ENCODE measurements at regions of chr20 and their contacts with region 1.

Region 1: DNA sequence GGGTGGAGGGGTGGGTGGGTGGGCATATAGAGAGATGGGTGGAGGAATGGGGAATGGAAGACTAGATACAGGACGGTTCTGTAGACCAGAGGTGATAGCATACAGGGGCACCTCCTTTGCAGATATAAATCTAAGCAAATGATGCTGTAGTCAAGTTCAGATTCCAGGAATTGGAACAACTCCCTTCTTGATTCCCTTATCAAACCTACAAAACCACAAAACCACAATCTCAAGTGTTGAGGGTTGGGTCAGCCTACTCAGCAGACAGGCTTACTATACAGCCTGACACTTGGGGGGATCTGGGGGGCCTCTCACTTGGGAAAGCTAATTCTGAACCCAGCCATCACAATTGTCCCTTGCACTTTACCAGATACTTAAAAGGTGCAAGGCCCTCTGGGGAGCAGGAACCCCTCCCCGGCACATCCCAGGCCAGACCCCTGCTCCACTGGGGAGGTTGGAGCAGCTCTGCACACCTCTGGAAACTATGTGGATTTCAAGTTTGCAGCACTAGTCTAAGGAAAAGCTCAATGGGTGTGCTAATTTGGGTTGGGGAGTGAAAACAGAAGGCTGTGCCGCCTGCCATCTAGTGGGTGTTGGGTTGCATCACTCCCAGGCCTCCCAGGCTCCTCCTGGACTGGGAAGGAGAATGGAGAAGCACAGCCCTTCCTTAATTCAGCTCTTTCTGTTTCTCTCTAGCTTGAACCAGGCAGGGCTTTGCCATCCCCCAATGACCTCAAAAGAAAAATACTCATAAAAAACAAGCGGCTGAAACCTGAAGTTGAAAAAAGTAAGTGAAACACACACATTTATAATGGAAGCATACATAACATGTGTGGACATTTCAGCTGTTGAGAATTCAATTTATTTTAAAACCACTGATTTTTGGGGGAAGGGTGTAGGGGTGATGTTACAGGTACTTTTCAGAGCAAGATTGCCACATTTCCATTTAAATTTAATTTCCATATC is 121.2 kb upstream of the LAMP5 start:
- DNase-seq: peak; percentile 33
- ATAC-seq: no peak
- H3K4me3 Mint-ChIP-seq: no peak overlapping the region
- H3K27ac Mint-ChIP-seq: no peak overlapping the region
- H3K4me1 Mint-ChIP-seq: no peaks in the 10 kb centered on the region
- H3K27me3 Mint-ChIP-seq: no peaks in the 10 kb centered on the region

Region 2: DNA sequence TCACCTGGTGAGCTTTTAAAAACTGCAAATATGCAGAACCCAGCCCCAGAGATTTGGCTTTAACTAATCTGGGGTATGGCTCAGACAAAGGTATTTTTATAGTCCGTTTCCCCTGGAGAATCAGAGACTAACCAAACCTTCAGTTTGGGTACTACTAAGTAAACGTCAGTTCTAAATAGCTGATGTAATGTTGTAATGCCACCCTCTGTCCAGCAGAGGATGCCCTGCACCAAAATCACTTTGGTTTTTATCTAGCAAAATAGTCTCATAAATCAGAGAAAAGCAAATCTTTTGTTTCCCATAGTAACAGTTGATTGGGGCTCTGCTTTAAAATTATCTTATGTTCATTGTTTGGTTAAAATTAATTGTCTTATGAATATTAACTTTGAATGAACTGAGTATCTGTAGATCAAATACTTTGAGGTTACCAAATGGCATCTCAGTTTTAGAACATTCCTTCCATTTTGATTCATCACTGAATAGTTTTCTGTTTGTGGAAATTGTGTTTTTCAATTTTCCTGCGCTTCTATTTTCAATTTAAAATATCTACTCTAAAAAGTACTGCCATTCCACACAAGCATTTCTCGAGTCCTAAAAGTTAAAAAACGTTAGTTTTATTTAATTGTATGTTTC is 602.6 kb before region 1 on chr20:
- CTCF ChIA-PET with region 1: no interaction called
- POLR2A ChIA-PET with region 1: no interaction called
- intact Hi-C with region 1: loop called in 1 of 2 experiments (anchors 2 kb)
- DNase-seq: peak; percentile 42
- ATAC-seq: no peak
- H3K4me3 Mint-ChIP-seq: no peak overlapping the region
- H3K27ac Mint-ChIP-seq: no peak overlapping the region
- H3K4me1 Mint-ChIP-seq: no peaks in the 10 kb centered on the region
- H3K27me3 Mint-ChIP-seq: no peaks in the 10 kb centered on the region

Region 3: DNA sequence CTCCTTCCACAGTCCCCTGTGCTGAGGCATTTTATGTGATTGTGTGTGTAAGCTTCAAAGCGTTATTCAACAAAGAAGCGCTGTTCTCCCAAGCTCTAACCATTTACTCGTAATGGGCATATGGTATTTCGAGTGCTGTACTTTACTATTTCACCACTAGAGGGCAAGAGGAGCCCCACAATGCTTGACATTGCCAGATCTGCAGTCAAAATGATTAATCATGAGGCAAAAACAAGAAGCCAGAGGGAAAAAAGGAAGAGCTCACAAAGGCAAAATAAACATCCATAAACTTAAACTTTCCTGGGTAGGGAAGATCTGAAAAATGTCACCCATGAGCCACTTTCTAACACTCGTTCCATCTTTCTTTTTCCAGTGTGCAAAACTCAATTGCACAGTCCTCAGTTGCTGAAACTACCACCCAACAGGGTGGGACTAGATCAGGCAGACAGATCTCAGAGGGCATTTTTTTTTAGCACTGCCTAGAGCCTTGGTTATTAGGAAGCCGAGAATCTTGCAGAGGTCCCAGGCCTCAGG is 539.3 kb before region 1 on chr20:
- CTCF ChIA-PET with region 1: interaction called, 3 read pairs
- POLR2A ChIA-PET with region 1: no interaction called
- intact Hi-C with region 1: loop called in 1 of 2 experiments (anchors 10 kb)
- DNase-seq: peak; percentile 5
- ATAC-seq: peak; percentile 81
- H3K4me3 Mint-ChIP-seq: no peak overlapping the region
- H3K27ac Mint-ChIP-seq: no peak overlapping the region
- H3K4me1 Mint-ChIP-seq: no peaks in the 10 kb centered on the region
- H3K27me3 Mint-ChIP-seq: no peaks in the 10 kb centered on the region